Naive thymus-derived CD4-positive, alpha-beta T cell (primary cell): ENCODE measurements at regions of chr5 and their contacts with region 1.

Region 1: GRCh38 chr5:96807075-96807654 is 580 bp downstream of the ERAP1 start:
- DNase-seq: peak in 1 of 9 donors; percentile 67
- ATAC-seq: peak; percentile 17
- H3K4me3 ChIP-seq: peak overlapping the region; percentile 85
- H3K4me3 Mint-ChIP-seq: peak overlapping the region; percentile 90 to 100 (median 96)
- H3K27ac ChIP-seq: peak overlapping the region; percentile 99
- H3K27ac Mint-ChIP-seq: peak overlapping the region; percentile 98 to 100 (median 99)
- H3K4me1 ChIP-seq: peaks cover 40 to 69% of the 10 kb centered on the region in 2 donors
- H3K4me1 Mint-ChIP-seq: peaks cover 57 to 92% (median 89%) of the 10 kb centered on the region in 7 donors
- H3K27me3 ChIP-seq: no peaks in the 10 kb centered on the region
- H3K27me3 Mint-ChIP-seq: peaks cover 0 to 2% (median 0%) of the 10 kb centered on the region in 5 donors

Region 2: DNA sequence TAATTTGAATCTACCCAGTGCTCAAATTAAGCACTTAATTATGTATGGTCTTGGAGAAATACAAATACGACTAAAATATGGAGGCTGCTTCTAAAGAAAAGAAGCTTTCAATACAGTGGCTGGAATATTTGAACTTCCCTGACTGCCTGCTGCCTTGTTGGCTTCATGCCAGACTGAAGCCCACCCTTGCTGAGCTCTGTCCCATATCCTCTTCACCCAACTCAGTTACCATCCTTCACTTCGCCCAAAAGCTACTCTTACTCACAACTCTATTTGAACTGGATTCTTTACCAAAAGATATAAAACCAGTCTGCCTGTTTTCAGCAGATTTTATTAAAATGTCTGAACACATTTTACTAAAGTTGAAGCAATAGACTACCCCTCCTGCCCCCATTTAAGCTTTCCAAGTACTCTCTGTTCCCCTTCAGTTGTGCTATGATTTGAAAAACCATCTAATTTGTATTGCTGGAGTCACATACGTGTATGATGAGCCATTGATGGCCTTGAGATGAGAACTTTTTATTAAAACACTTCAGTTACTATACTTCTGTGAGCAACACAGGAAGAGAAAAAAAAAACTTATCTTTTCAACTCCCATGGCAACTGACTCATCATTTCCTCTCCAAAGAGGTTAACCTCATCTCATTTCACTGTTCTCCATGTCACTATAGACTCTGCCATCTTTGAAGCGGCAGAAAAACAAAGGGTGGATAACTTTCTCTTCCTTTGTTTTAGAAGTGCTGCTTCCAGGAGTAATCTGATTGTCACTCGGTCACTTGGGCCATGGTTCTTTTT is 270.0 kb before region 1 on chr5:
- CTCF ChIA-PET with region 1: no interaction called
- POLR2A ChIA-PET with region 1: no interaction called
- intact Hi-C with region 1: loop called in 1 of 2 experiments (anchors 10 kb)
- DNase-seq: peak in 7 of 9 donors; percentile 54 to 79 (median 73)
- ATAC-seq: peak; percentile 97
- H3K4me3 ChIP-seq: peak overlapping the region; percentile 14
- H3K4me3 Mint-ChIP-seq: peak overlapping the region in 9 of 10 donors; percentile 26 to 76 (median 61)
- H3K27ac ChIP-seq: peak overlapping the region; percentile 41
- H3K27ac Mint-ChIP-seq: peak overlapping the region; percentile 82 to 94 (median 88)
- H3K4me1 ChIP-seq: peaks cover 20 to 23% of the 10 kb centered on the region in 2 donors
- H3K4me1 Mint-ChIP-seq: peaks cover 15 to 41% (median 32%) of the 10 kb centered on the region in 7 donors
- H3K27me3 ChIP-seq: no peaks in the 10 kb centered on the region
- H3K27me3 Mint-ChIP-seq: peaks cover 0 to 6% (median 0%) of the 10 kb centered on the region in 5 donors

Region 3: DNA sequence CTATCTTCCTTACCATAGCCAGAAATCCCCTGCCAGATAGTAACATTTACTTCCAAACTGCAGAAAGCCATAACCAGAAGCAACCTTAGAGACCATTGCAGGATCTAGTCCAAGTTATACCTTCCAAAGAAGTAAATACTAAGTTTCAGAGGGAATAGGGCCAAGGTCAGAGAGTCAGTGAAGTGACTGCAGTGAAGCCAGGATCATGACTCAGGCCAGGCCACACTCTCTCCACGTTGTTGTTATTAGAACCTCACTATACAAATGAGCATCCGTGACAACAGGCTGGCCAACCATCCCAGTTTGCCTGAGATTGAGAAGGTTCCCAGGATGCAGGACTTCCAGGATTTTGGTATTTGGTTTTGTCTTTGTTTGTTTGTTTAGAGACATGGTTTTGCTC is 10.7 kb before region 1 on chr5:
- CTCF ChIA-PET with region 1: interaction called, 4 read pairs
- POLR2A ChIA-PET with region 1: interaction called, 36 read pairs
- intact Hi-C with region 1: loop called in 1 of 2 experiments (anchors 1 kb)
- DNase-seq: no peak
- ATAC-seq: no peak
- H3K4me3 ChIP-seq: no peak overlapping the region
- H3K4me3 Mint-ChIP-seq: peak overlapping the region in 4 of 10 donors; percentile 14 to 42 (median 26)
- H3K27ac ChIP-seq: no peak overlapping the region
- H3K27ac Mint-ChIP-seq: peak overlapping the region in 8 of 9 donors; percentile 33 to 89 (median 77)
- H3K4me1 ChIP-seq: peaks cover 14 to 22% of the 10 kb centered on the region in 2 donors
- H3K4me1 Mint-ChIP-seq: peaks cover 29 to 84% (median 68%) of the 10 kb centered on the region in 7 donors
- H3K27me3 ChIP-seq: no peaks in the 10 kb centered on the region
- H3K27me3 Mint-ChIP-seq: no peaks in the 10 kb centered on the region

Region 4: DNA sequence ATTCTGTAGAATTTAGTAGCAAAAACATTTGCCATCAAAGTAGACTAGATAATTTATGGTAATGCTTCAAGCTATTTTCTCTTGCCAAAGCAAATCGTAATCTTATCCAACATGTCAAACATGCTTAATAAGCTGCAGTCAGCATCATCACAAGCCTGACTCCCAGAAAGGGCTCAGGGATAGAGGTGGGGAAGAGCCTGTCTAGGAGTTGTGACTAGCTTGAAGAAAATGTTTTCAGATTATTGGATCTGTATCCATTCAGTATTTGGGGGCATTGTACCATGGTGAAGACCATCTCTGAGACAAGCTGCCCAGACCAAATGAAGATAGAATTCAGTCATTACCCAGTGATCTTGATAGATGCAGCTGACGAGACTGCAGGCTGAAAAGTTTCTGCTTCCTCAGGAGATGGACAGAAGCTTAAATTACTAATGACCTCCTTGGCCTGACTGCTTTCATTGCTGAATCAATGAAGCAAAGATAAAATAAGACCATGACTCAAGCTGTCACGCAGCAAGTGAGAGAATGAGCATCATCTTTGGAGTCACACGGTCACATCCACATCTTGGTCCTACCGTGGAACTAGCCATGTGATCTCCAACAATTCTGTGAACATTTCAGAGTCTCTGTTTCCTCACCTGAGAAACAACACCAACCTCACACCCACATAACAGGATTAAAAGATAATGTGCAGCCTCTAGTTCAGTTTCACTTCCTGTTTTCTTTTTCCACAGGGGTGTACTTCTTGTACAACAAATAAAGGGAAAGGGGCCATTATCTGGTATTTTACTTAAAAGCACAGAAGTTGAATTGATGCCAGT is 78.6 kb after region 1 on chr5:
- CTCF ChIA-PET with region 1: no interaction called
- POLR2A ChIA-PET with region 1: interaction called, 3 read pairs
- intact Hi-C with region 1: loop called in 1 of 2 experiments (anchors 2 kb)
- DNase-seq: peak in 7 of 9 donors; percentile 46 to 81 (median 69)
- ATAC-seq: peak; percentile 93
- H3K4me3 ChIP-seq: peak overlapping the region; percentile 38
- H3K4me3 Mint-ChIP-seq: peak overlapping the region; percentile 67 to 87 (median 78)
- H3K27ac ChIP-seq: peak overlapping the region; percentile 63
- H3K27ac Mint-ChIP-seq: peak overlapping the region; percentile 91 to 99 (median 96)
- H3K4me1 ChIP-seq: peaks cover 56 to 58% of the 10 kb centered on the region in 2 donors
- H3K4me1 Mint-ChIP-seq: peaks cover 44 to 76% (median 69%) of the 10 kb centered on the region in 7 donors
- H3K27me3 ChIP-seq: no peaks in the 10 kb centered on the region
- H3K27me3 Mint-ChIP-seq: no peaks in the 10 kb centered on the region

Region 5: DNA sequence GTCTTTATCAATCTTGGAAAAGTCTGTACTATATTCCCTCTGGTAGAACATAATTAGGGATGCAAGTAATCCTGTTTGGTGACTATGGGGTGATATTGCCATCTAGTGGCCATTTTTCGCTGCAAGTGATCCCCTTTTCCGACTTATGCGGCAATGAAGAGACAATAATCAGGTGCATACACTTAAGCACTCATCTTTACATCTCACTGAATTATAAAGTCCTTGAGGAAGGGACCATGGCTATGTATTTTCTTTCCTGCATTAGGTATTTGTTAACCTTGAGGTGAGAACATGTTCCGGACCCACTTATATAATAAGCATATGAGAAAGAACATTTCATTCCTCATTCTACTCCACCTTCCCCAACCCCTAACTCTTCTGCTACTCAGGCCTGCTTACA is 354.9 kb after region 1 on chr5:
- CTCF ChIA-PET with region 1: interaction called, 4 read pairs
- POLR2A ChIA-PET with region 1: interaction called, 4 read pairs
- intact Hi-C with region 1: loop called in 1 of 2 experiments (anchors 2 kb)
- DNase-seq: peak in 7 of 9 donors; percentile 23 to 64 (median 45)
- ATAC-seq: peak; percentile 62
- H3K4me3 ChIP-seq: no peak overlapping the region
- H3K4me3 Mint-ChIP-seq: no peak overlapping the region
- H3K27ac ChIP-seq: no peak overlapping the region
- H3K27ac Mint-ChIP-seq: no peak overlapping the region
- H3K4me1 ChIP-seq: no peaks in the 10 kb centered on the region
- H3K4me1 Mint-ChIP-seq: peaks cover 0 to 17% (median 11%) of the 10 kb centered on the region in 7 donors
- H3K27me3 ChIP-seq: no peaks in the 10 kb centered on the region
- H3K27me3 Mint-ChIP-seq: peaks cover 0 to 4% (median 0%) of the 10 kb centered on the region in 5 donors